Activated B cell treated with CpG ODN at 0.5 μM for 24 hours (primary cell): ENCODE measurements at regions of chr16 and their contacts with region 1.

Region 1: GRCh38 chr16:67499106-67499505 is 15.8 kb upstream of the AGRP start:
- DNase-seq: no peak
- ATAC-seq: no peak
- H3K4me3 Mint-ChIP-seq: no peak overlapping the region
- H3K27ac Mint-ChIP-seq: no peak overlapping the region
- H3K4me1 Mint-ChIP-seq: peaks cover 28% of the 10 kb centered on the region
- H3K27me3 Mint-ChIP-seq: no peaks in the 10 kb centered on the region
- CTCF ChIP-seq: no peak

Region 2: DNA sequence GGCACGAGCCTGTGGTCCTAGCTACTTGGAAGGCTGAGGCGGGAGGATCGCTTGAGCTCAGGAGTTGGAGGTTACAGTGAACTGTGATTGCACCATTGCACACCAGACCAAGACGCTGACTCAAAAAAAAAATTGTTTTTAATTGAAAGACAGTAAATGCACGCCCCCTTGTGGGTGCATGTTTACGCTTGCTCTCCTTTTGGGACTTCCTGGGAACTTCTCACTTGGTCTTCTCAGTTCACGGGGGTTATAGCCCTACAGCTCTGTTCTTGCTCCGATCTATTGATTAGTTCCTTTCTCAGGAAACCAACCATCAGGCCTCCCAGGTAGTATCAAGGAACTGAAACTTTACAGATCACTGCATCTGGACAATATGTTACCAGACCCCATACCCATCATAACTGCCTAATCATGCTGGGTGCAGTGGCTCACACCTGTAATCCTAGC is 15.3 kb after region 1 on chr16:
- CTCF ChIA-PET with region 1: interaction called, 298 read pairs
- POLR2A ChIA-PET with region 1: interaction called, 98 read pairs
- intact Hi-C with region 1: loop called (anchors 1 kb)
- DNase-seq: no peak
- ATAC-seq: peak; percentile 23
- H3K4me3 Mint-ChIP-seq: peak overlapping the region; percentile 60
- H3K27ac Mint-ChIP-seq: peak overlapping the region; percentile 94
- H3K4me1 Mint-ChIP-seq: peaks cover 73% of the 10 kb centered on the region
- H3K27me3 Mint-ChIP-seq: no peaks in the 10 kb centered on the region
- CTCF ChIP-seq: no peak

Region 3: GRCh38 chr16:67546761-67547422 is 47.8 kb after region 1 on chr16:
- CTCF ChIA-PET with region 1: interaction called, 10 read pairs
- POLR2A ChIA-PET with region 1: interaction called, 4 read pairs
- intact Hi-C with region 1: loop called (anchors 2 kb)
- DNase-seq: peak; percentile 73
- ATAC-seq: no peak
- H3K4me3 Mint-ChIP-seq: peak overlapping the region; percentile 58
- H3K27ac Mint-ChIP-seq: peak overlapping the region; percentile 95
- H3K4me1 Mint-ChIP-seq: peaks cover 87% of the 10 kb centered on the region
- H3K27me3 Mint-ChIP-seq: no peaks in the 10 kb centered on the region
- CTCF ChIP-seq: peak; percentile 95

Region 4: DNA sequence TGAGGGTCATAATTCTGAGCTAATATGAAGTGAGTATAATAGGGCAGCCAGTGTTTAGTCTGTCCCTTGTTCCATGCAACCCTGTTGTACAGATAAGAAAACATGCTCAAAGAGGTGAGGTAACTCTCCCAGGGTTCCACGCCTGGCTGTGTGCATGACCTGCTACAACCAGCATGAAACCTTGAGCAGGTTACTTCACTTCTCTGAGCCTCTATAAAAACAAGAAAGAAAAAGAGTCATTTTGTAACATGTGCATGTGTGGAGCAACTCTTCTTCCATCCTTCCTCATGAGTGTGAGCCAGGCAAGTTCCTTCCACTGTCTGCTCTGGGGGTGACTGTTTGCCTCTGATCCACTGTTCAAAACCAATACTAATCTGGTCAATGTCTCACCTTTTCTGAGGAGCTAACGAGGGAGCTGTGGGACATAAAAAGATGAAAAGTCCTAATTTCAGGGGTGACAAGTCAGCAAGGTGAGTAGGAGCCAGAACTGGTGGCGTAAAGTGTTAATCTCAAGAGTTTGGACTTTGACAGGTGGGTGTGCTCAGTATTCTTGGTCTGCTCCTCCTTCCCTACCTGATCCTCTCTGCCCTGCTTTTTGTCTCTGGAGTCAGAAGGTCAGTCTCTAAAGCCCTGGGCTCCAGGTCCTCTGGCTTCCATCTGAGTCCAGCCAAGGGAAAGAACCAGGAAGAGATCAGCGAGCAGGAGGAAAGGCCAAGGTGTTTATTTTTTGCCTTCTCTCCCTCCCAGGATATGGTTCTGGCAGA is 198.5 kb after region 1 on chr16:
- CTCF ChIA-PET with region 1: no interaction called
- POLR2A ChIA-PET with region 1: no interaction called
- intact Hi-C with region 1: no loop called
- DNase-seq: no peak
- ATAC-seq: no peak
- H3K4me3 Mint-ChIP-seq: no peak overlapping the region
- H3K27ac Mint-ChIP-seq: no peak overlapping the region
- H3K4me1 Mint-ChIP-seq: peaks cover 9% of the 10 kb centered on the region
- H3K27me3 Mint-ChIP-seq: no peaks in the 10 kb centered on the region
- CTCF ChIP-seq: no peak

Region 5: GRCh38 chr16:67928561-67929364 is 429.7 kb after region 1 on chr16:
- CTCF ChIA-PET with region 1: no interaction called
- POLR2A ChIA-PET with region 1: no interaction called
- intact Hi-C with region 1: loop called (anchors 1 kb)
- DNase-seq: peak; percentile 64
- ATAC-seq: peak; percentile 90
- H3K4me3 Mint-ChIP-seq: no peak overlapping the region
- H3K27ac Mint-ChIP-seq: no peak overlapping the region
- H3K4me1 Mint-ChIP-seq: peaks cover 36% of the 10 kb centered on the region
- H3K27me3 Mint-ChIP-seq: no peaks in the 10 kb centered on the region
- CTCF ChIP-seq: peak; percentile 43